Tibial artery (tissue), 4 donors: ENCODE measurements at regions of chr6 and their contacts with region 1.

Region 1: DNA sequence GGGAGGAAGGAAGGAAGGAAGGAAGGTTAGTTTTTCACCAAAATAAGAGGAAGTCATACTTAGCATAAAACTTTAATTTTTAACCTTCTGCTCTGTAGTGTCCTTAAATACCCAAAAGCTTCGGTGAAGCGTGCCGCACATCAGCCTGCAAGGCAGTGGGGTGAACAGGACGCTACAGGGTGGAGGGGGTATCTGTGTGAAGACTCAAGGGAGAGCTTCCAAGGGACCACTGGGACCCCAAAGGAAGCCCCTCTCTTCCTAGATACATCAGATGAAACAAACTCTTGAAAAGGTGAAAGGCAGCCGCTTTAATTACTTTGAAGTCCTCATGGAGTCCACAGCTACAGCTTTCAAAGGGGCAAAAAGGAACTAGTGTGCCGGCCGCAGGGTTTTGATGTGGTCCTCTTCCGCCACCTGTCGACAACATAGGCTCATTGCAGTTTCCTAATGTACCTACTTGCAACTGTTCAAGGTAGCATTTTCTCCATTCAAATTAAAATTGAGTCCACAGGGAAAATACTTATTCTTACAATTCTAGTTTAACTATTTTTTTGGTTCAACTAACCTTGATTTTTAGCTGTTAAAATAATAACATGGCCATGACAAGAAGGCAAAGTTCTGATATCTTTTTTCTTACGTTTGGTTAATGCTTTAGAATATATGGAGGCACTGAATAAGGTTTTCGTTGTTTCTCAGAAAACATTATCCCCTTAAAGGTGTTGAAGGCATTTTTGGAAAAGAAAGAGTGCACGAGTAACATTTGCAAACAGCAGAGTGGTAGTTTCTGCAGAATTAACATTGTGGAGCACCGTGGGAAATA is 135.0 kb upstream of the RIPOR2 start:
- DNase-seq: peak; percentile 80 to 86
- H3K4me3 ChIP-seq: no peak overlapping the region
- H3K27ac ChIP-seq: no peak overlapping the region
- H3K4me1 ChIP-seq: no peaks in the 10 kb centered on the region
- H3K27me3 ChIP-seq: no peaks in the 10 kb centered on the region
- CTCF ChIP-seq: peak; percentile 88 to 90

Region 2: GRCh38 chr6:24855395-24856245 is 215.1 kb before region 1 on chr6:
- intact Hi-C with region 1: loop called (anchors 2 kb)
- DNase-seq: peak in 1 of 2 donors; percentile 53
- H3K4me3 ChIP-seq: peak overlapping the region in 1 of 2 donors; percentile 34
- H3K27ac ChIP-seq: peak overlapping the region; percentile 33 to 55
- H3K4me1 ChIP-seq: peaks cover 0 to 7% (median 5%) of the 10 kb centered on the region in 4 donors
- H3K27me3 ChIP-seq: no peaks in the 10 kb centered on the region
- CTCF ChIP-seq: peak; percentile 81 to 90